Calu3 (cell line): ENCODE measurements at regions of chrX and their contacts with region 1.

Region 1: GRCh38 chrX:48897621-48898306 is at the starts of genes PQBP1 and TIMM17B:
- DNase-seq: peak; percentile 90
- H3K4me3 Mint-ChIP-seq: peak within 1 kb of the TSS; percentile 95
- H3K27ac Mint-ChIP-seq: peak within 1 kb of the TSS; percentile 99
- H3K4me1 Mint-ChIP-seq: no peaks in the 10 kb centered on the region
- H3K27me3 Mint-ChIP-seq: no peaks in the 10 kb centered on the region
- CTCF ChIP-seq: no peak
- total RNA-seq, gene PQBP1: 110 and 113 TPM in 2 replicates
- total RNA-seq, gene TIMM17B: 86.1 and 96.8 TPM in 2 replicates

Region 2: GRCh38 chrX:48761674-48762471 is 135.9 kb before region 1 on chrX and contains the start of gene GLOD5:
- CTCF ChIA-PET with region 1: no interaction called
- intact Hi-C with region 1: loop called (anchors 5 kb)
- DNase-seq: peak; percentile 86
- H3K4me3 Mint-ChIP-seq: peak within 1 kb of the TSS; percentile 68
- H3K27ac Mint-ChIP-seq: peak within 1 kb of the TSS; percentile 99
- H3K4me1 Mint-ChIP-seq: peaks cover 12% of the 10 kb centered on the region
- H3K27me3 Mint-ChIP-seq: no peaks in the 10 kb centered on the region
- CTCF ChIP-seq: peak; percentile 37
- total RNA-seq, gene GLOD5: not detected in 2 replicates

Region 3: DNA sequence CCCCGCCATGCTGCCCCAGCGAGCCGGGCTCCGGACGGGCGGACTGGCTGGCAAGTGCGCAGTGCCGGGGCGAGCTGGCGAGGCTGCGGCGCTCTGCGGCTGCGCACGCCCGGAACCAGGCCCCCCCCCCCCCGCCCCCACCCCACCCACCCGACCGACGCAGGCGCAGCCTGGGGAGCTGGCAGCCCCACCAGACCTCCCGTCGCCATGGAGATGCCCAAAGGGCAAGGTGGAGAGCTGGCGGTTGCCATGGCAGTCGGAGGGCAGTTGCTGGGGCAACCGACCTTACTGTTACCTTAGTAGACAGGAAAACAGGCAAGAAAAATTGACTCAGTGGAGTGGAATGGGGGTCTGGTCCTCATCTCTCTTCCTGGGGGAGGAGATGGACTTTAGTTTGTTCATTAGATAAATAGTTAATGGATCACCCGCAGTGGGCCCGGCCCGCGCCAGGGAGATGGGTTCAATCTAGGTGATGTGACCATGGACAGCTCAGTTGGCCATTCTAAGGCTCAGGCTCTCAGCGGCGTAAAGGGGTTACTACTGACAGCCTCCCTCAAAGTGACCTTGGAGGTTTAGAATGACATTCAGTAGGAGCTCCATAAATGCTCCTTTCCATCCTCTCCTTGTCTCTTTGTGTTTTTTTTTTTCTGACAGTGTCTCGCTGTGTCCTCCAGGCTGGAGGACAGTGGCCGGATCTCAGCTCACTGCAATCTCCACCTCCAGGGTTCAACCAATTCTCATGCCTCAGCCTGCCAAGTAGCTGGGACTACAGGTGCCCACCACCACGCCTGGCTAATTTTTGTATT is 62.0 kb before region 1 on chrX and contains the start of gene PCSK1N:
- CTCF ChIA-PET with region 1: no interaction called
- intact Hi-C with region 1: loop called (anchors 10 kb)
- DNase-seq: peak; percentile 81
- H3K4me3 Mint-ChIP-seq: peak within 1 kb of the TSS; percentile 81
- H3K27ac Mint-ChIP-seq: peak within 1 kb of the TSS; percentile 40
- H3K4me1 Mint-ChIP-seq: peaks cover 13% of the 10 kb centered on the region
- H3K27me3 Mint-ChIP-seq: no peaks in the 10 kb centered on the region
- CTCF ChIP-seq: no peak
- total RNA-seq, gene PCSK1N: 53.3 and 70.5 TPM in 2 replicates